ENCODE measurements at regions of chr6 and their contacts with region 1.

Region 1: DNA sequence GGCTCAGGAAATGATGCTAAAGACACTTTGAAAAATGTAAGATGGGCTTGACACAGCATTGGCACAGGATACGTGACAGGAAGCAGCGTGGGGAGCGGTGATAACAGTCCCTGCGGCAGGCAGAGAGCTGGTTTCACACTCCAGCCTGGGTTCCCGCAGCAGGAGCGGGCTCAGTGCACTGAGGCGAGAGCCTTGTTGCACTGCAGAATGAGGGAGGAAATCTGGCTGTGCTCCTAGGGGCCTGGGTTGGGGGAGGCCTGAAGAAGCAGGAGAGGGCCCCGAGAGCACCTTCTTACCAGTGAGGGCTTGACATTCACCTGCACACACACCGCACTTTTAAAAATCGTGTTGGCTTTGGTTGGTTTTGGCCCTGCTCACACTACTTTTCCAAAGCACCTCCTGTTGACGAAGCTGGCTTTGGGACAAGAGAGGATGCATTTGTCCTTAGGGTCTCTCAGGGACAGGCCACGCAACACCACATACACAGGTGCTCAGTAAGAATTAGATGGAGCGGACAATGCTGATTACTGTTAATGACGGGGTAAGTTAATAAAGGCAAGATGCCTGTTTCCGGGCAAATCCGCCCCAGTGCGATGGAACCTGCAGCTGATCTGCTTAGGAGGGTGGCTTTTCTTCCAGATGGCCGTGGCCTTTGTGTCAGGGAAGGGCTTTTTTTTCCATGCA is 49.4 kb upstream of the ARMC2 start:
- DNase-seq: peak; percentile 90 to 97 (median 93)
- H3K4me3 ChIP-seq: peak overlapping the region in 5 of 7 experiments; percentile 15 to 57 (median 44)
- H3K27ac ChIP-seq: peak overlapping the region; percentile 75 to 83
- H3K4me1 ChIP-seq: peaks cover 20 to 57% (median 55%) of the 10 kb centered on the region in 4 experiments
- H3K27me3 ChIP-seq: no peaks in the 10 kb centered on the region

Region 2: GRCh38 chr6:108782179-108783041 is 16.4 kb before region 1 on chr6:
- CTCF ChIA-PET with region 1: interaction called, 38 read pairs
- POLR2A ChIA-PET with region 1: no interaction called
- DNase-seq: peak; percentile 85 to 91 (median 88)
- H3K4me3 ChIP-seq: peak overlapping the region in 6 of 7 experiments; percentile 54 to 92 (median 72)
- H3K27ac ChIP-seq: no peak overlapping the region
- H3K4me1 ChIP-seq: peaks cover 0 to 20% (median 6%) of the 10 kb centered on the region in 4 experiments
- H3K27me3 ChIP-seq: no peaks in the 10 kb centered on the region

Region 3: DNA sequence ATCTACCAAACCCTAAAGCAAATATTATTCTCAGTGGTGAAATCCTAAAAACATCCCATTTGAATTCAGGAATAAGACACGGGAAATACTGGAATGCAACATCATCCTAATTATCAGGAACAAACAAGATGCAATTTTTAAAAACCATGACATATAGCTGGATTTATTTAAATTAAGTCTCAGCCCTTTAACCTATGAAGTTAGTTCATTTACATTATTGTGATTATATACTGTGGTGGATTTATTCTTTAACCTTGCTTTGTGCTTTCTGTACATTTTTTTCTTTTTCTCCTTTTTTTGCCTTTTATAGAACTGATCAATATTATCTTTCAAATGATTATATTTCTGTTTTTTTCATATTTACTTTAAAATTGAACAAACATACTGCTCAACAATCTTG is 10.4 kb before region 1 on chr6:
- CTCF ChIA-PET with region 1: interaction called, 38 read pairs
- POLR2A ChIA-PET with region 1: no interaction called
- DNase-seq: no peak
- H3K4me3 ChIP-seq: no peak overlapping the region
- H3K27ac ChIP-seq: no peak overlapping the region
- H3K4me1 ChIP-seq: no peaks in the 10 kb centered on the region
- H3K27me3 ChIP-seq: no peaks in the 10 kb centered on the region

Region 4: DNA sequence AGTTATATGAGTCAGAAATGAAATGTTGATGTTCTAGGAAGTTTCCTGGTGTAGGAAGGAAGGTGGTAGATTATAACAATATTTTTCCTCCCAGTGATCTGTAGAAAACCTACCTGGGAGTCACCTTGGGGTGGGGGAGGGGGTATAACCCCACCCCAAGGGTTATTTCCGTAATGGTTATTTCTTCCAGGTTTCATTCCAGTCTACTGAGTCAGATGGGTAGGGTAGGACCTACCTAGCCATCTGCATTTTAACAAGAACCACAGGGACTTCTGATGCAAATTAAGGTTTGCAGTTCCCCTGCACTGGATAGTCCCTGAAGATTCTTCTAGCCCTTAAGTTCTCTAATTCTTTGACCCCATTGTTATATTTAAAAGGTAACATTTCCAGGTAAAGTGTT is 138.4 kb after region 1 on chr6:
- CTCF ChIA-PET with region 1: no interaction called
- POLR2A ChIA-PET with region 1: no interaction called
- DNase-seq: no peak
- H3K4me3 ChIP-seq: no peak overlapping the region
- H3K27ac ChIP-seq: no peak overlapping the region
- H3K4me1 ChIP-seq: peaks cover 0 to 7% (median 2%) of the 10 kb centered on the region in 4 experiments
- H3K27me3 ChIP-seq: no peaks in the 10 kb centered on the region